ENCODE measurements at regions of chr1 and their contacts with region 1.

Region 1: GRCh38 chr1:101996825-101997465 is at the start of gene OLFM3:
- DNase-seq: peak; percentile 20
- H3K4me3 ChIP-seq: no peak within 1 kb of the TSS
- H3K27ac ChIP-seq: no peak within 1 kb of the TSS
- H3K4me1 ChIP-seq: no peaks in the 10 kb centered on the region
- H3K27me3 ChIP-seq: peaks cover 14% of the 10 kb centered on the region
- CTCF ChIP-seq: no peak
- total RNA-seq, gene OLFM3: not detected

Region 2: GRCh38 chr1:101914473-101915242 is 82.3 kb before region 1 on chr1:
- CTCF ChIA-PET with region 1: no interaction called
- dilution Hi-C with region 1: loop called (anchors 5 kb)
- in situ Hi-C with region 1: no loop called
- intact Hi-C with region 1: no loop called
- DNase-seq: no peak
- H3K4me3 ChIP-seq: no peak overlapping the region
- H3K27ac ChIP-seq: no peak overlapping the region
- H3K4me1 ChIP-seq: no peaks in the 10 kb centered on the region
- H3K27me3 ChIP-seq: peaks cover 2% of the 10 kb centered on the region
- CTCF ChIP-seq: no peak

Measured in mammary epithelial cell (primary cell).